Sigmoid colon (tissue), 7 donors: ENCODE measurements at regions of chr11 and their contacts with region 1.

Region 1: DNA sequence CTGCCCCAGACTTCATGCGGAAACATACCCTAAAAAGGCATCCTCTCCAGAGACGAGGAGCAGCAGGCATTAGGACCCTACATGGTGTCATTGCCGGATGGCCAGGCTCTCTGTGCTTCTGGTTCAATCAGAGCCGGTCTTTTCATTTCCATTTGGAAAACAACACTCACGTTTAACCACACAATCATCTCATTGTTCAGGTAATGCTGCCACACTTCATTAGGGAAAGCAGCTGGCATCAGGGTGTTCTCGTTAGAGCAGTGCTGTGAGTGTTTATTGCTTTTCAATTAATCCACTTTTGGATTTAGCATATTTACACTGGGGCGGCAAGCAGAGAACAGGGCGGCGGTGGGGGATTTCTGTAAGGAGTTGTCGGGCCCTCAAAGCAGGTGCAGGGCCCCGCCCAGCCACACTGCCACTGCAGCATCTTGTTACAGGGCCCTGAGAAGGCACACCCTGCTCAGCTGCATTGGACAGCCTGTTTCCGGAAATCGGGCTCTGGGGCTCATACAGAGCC is 338.6 kb downstream of the SHANK2 start:
- DNase-seq: peak; percentile 77
- H3K4me3 ChIP-seq: peak overlapping the region in 3 of 4 donors; percentile 26 to 32 (median 30)
- H3K27ac ChIP-seq: peak overlapping the region; percentile 83 to 90 (median 87)
- H3K4me1 ChIP-seq: peaks cover 0 to 25% (median 8%) of the 10 kb centered on the region in 4 donors
- H3K27me3 ChIP-seq: no peaks in the 10 kb centered on the region
- CTCF ChIP-seq: no peak
- EP300 ChIP-seq: no peak
- POLR2A ChIP-seq: no peak

Region 2: DNA sequence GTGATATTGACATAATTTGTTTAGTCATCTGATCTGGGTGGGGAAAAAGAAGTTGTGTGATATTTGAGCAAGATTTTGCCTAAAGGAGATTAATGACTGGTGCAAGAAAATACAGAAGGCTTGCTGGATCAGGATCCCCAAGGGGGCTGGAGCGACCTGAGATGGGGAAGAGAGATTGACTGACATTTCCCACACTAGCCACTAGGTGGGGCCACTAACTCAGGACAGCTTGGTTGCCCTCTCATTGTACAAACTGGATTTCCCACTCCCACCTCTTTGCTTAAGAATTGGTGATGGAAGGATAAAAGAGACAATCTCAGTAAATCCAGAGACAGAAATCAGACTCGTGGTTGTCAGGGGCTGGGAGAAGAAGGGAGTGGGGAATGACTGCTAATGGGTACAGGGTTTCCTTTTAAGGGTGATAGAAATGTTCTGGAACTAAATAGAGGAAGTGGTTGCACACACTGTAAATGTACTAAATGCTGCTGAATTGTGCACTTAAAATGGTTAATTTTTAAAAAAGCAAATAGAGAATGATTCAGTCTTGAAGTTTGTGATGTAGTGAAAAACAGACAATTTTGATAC is 464.7 kb before region 1 on chr11:
- intact Hi-C with region 1: no loop called
- DNase-seq: no peak
- H3K4me3 ChIP-seq: no peak overlapping the region
- H3K27ac ChIP-seq: no peak overlapping the region
- H3K4me1 ChIP-seq: no peaks in the 10 kb centered on the region
- H3K27me3 ChIP-seq: no peaks in the 10 kb centered on the region
- CTCF ChIP-seq: no peak
- EP300 ChIP-seq: no peak
- POLR2A ChIP-seq: no peak

Region 3: GRCh38 chr11:70595452-70595851 is 318.3 kb before region 1 on chr11:
- intact Hi-C with region 1: no loop called
- DNase-seq: no peak
- H3K4me3 ChIP-seq: no peak overlapping the region
- H3K27ac ChIP-seq: no peak overlapping the region
- H3K4me1 ChIP-seq: no peaks in the 10 kb centered on the region
- H3K27me3 ChIP-seq: no peaks in the 10 kb centered on the region
- CTCF ChIP-seq: no peak
- EP300 ChIP-seq: no peak
- POLR2A ChIP-seq: no peak

Region 4: GRCh38 chr11:70826541-70827335 is 87.0 kb before region 1 on chr11:
- intact Hi-C with region 1: loop called (anchors 5 kb)
- DNase-seq: peak; percentile 81
- H3K4me3 ChIP-seq: peak overlapping the region; percentile 31 to 48 (median 43)
- H3K27ac ChIP-seq: peak overlapping the region; percentile 68 to 80 (median 74)
- H3K4me1 ChIP-seq: peaks cover 2 to 41% (median 24%) of the 10 kb centered on the region in 4 donors
- H3K27me3 ChIP-seq: peaks cover 0 to 32% (median 0%) of the 10 kb centered on the region in 3 donors
- CTCF ChIP-seq: no peak
- EP300 ChIP-seq: no peak
- POLR2A ChIP-seq: no peak

Region 5: DNA sequence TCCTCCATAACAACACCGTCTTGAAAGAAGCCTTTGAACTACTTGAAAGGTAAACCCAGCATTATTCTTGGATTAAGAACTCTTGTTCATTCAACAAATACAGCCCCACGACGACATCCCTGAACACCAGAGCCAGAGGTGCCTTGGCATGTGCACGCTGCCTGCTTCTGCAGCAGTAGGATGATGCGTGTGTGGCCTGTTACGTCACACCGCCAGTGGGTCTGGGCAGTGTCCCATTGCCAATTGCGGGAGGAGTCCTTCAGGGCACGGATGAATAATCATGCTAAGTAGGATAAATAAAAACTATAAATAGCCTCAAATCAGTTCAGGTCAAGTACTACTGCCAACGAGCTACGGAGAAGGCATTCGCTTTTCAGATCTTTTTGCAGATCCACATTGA is 41.9 kb before region 1 on chr11:
- intact Hi-C with region 1: loop called (anchors 5 kb)
- DNase-seq: peak; percentile 90
- H3K4me3 ChIP-seq: no peak overlapping the region
- H3K27ac ChIP-seq: peak overlapping the region in 2 of 4 donors; percentile 12 to 20
- H3K4me1 ChIP-seq: peaks cover 0 to 21% (median 18%) of the 10 kb centered on the region in 4 donors
- H3K27me3 ChIP-seq: no peaks in the 10 kb centered on the region
- CTCF ChIP-seq: no peak
- EP300 ChIP-seq: peak in 3 of 4 donors; percentile 49 to 80 (median 66)
- POLR2A ChIP-seq: no peak

Region 6: DNA sequence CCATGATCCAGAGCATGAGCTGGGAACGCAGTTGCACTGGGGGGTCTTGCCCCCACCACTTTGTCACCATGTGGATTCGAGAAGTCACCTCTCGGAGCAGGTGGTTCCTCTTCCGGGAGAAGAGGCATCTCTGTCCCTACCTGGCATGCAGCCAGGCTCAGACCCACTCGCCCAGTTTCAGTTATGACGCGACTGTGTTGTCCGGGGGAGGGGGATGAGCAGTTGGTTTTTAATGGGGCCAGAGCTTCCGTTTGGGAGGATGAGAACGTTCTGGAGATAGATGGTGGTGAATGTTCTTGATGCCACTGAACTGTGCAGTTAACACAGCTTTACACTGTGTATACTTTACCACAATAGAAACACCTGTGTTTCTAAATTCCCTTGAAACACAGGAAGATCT is 492.9 kb after region 1 on chr11:
- intact Hi-C with region 1: no loop called
- DNase-seq: no peak
- H3K4me3 ChIP-seq: no peak overlapping the region
- H3K27ac ChIP-seq: no peak overlapping the region
- H3K4me1 ChIP-seq: no peaks in the 10 kb centered on the region
- H3K27me3 ChIP-seq: no peaks in the 10 kb centered on the region
- CTCF ChIP-seq: no peak
- EP300 ChIP-seq: no peak
- POLR2A ChIP-seq: no peak